GM10248 (cell line): ENCODE measurements at regions of chr7 and their contacts with region 1.

Region 1: GRCh38 chr7:106317971-106318370 is 33.2 kb upstream of the NAMPT start:
- DNase-seq: no peak
- CTCF ChIP-seq: no peak

Region 2: DNA sequence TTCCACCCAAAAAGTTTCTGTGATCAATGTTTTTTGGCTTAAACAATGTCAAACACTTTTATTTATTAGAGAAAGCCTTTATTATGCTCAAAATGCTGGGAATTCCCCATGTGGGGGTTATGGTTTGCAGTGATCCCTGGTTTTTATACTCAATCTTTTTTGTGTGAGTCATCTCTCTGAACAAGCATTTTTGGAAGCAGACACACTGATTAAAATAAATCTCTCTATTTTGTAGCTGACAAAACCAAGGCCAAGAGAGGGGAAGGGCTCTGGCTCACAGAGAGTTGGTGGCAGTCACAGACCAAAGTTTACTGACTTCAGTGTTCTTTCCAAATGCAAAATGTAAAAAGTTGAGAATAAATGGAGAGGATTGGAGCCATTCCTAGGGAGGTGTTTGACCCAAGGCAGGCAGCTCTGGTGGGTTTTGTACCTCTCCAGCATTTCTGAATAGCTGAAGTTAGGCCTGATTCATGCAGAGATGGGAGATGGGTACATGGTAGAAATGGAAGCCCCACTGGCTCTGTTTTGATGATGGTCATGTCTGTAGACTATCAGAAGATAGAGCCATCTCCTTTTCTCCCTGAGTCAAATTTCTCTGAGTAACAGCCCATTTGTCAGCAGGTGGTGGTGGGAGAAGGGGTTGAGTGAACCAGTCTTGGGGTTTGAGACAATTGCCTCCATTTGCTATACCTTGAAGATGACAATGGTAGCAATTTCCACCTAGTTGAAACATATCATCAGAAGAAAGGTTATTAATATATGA is 12.2 kb after region 1 on chr7:
- CTCF ChIA-PET with region 1: interaction called, 25 read pairs
- POLR2A ChIA-PET with region 1: no interaction called
- DNase-seq: no peak
- CTCF ChIP-seq: no peak

Region 3: GRCh38 chr7:106358103-106358663 is 40.2 kb after region 1 on chr7:
- CTCF ChIA-PET with region 1: no interaction called
- POLR2A ChIA-PET with region 1: no interaction called
- DNase-seq: no peak
- CTCF ChIP-seq: no peak